Common myeloid progenitor, CD34-positive (primary cell): ENCODE measurements at regions of chr2 and their contacts with region 1.

Region 1: GRCh38 chr2:105369747-105370690 is 28.8 kb downstream of the FHL2 start:
- DNase-seq: peak; percentile 88 to 95 (median 93)
- H3K4me3 ChIP-seq: no peak overlapping the region
- H3K27ac ChIP-seq: no peak overlapping the region
- H3K4me1 ChIP-seq: peaks cover 0 to 6% (median 0%) of the 10 kb centered on the region in 4 experiments
- H3K27me3 ChIP-seq: no peaks in the 10 kb centered on the region

Region 2: DNA sequence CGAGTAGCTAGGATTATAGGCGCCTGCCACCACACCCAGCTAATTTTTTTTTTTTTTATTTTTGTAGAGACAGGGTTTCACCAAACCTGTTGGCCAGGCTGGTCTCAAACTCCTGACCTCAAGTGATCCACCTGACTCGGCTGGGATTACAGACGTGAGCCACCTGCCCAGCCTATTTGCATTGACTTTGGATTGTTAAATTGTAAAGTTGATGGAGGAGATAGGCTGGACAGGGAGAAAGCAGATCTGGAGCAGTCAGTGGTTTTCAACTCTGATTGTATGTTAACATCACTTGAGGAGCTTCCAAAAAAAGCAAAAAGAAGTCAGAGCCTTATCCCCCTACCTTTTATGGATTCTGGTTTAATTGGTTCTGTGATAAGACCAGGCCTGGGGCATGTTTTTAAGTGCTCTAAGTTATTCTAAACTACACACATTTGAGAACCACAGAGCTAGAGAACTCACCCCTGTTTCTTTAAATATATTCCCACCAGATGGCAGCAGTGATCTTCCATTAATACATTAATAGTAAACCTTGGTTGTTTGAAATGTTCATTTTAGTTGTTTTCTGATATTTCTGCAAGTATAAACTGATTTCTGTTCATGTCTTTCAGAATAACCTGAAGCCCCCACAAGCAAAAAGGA is 25.2 kb before region 1 on chr2:
- CTCF ChIA-PET with region 1: interaction called, 57 read pairs
- POLR2A ChIA-PET with region 1: no interaction called
- DNase-seq: peak; percentile 64 to 82 (median 74)
- H3K4me3 ChIP-seq: no peak overlapping the region
- H3K27ac ChIP-seq: no peak overlapping the region
- H3K4me1 ChIP-seq: peaks cover 0 to 4% (median 0%) of the 10 kb centered on the region in 4 experiments
- H3K27me3 ChIP-seq: no peaks in the 10 kb centered on the region

Region 3: GRCh38 chr2:105411720-105412407 is 41.8 kb after region 1 on chr2:
- CTCF ChIA-PET with region 1: interaction called, 13 read pairs
- POLR2A ChIA-PET with region 1: no interaction called
- DNase-seq: no peak
- H3K4me3 ChIP-seq: no peak overlapping the region
- H3K27ac ChIP-seq: no peak overlapping the region
- H3K4me1 ChIP-seq: peaks cover 6 to 36% (median 29%) of the 10 kb centered on the region in 4 experiments
- H3K27me3 ChIP-seq: no peaks in the 10 kb centered on the region

Region 4: GRCh38 chr2:105545730-105546627 is 176.0 kb after region 1 on chr2:
- CTCF ChIA-PET with region 1: interaction called, 14 read pairs
- POLR2A ChIA-PET with region 1: no interaction called
- DNase-seq: peak; percentile 62 to 78 (median 73)
- H3K4me3 ChIP-seq: peak overlapping the region in 2 of 7 experiments; percentile 4 to 28
- H3K27ac ChIP-seq: no peak overlapping the region
- H3K4me1 ChIP-seq: peaks cover 0 to 13% (median 6%) of the 10 kb centered on the region in 4 experiments
- H3K27me3 ChIP-seq: peaks cover 0 to 2% (median 0%) of the 10 kb centered on the region in 5 experiments